ENCODE measurements at regions of chrX and their contacts with region 1.

Region 1: DNA sequence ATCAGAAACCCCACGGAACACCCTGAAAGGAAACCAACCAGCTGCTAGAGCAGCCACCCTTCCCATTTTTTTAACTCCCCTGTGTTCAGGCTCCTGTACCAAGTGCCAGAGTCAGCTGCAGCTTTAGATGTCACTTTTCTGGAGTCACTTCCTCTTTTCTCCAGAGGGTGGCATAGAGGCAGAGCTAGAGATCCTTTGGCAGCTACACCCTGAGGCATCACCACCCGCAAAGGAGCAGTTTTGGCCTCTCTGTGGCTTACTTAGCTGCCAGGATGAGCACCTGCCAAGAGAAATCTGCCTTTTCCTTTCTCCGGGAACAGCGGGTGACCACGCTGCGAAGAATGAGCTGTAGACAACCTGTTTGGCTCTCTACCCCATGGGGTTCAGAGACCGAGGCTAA is 58.0 kb upstream of the CHRDL1 start:
- DNase-seq: no peak
- H3K4me3 Mint-ChIP-seq: no peak overlapping the region
- H3K27ac Mint-ChIP-seq: no peak overlapping the region
- H3K4me1 Mint-ChIP-seq: no peaks in the 10 kb centered on the region
- H3K27me3 Mint-ChIP-seq: peaks cover 1% of the 10 kb centered on the region

Region 2: DNA sequence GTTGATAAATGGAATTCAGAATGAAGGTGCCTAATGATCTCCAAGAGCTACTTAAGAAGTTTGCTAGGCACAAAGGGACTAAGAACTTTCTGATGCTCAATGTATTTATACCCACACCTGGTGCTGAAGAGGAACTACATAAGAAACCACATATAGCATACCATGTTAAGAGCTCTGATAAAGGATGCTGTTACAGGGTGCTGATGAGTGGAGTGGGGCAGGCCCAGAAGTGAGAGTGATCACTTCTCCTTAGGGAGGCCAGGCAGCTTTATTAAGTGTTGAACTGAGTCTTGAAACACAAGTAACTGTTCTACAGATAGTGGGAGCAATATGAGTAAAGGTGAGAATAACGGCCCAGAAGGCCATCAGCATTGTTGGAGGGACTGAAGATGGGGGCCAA is 10.3 kb after region 1 on chrX:
- intact Hi-C with region 1: no loop called
- DNase-seq: no peak
- H3K4me3 Mint-ChIP-seq: no peak overlapping the region
- H3K27ac Mint-ChIP-seq: no peak overlapping the region
- H3K4me1 Mint-ChIP-seq: no peaks in the 10 kb centered on the region
- H3K27me3 Mint-ChIP-seq: peaks cover 4% of the 10 kb centered on the region

Region 3: GRCh38 chrX:111244235-111244750 is 390.7 kb after region 1 on chrX:
- intact Hi-C with region 1: loop called (anchors 5 kb)
- DNase-seq: no peak
- H3K4me3 Mint-ChIP-seq: no peak overlapping the region
- H3K27ac Mint-ChIP-seq: no peak overlapping the region
- H3K4me1 Mint-ChIP-seq: no peaks in the 10 kb centered on the region
- H3K27me3 Mint-ChIP-seq: peaks cover 5% of the 10 kb centered on the region

Measured in activated T-helper 1 cell treated with anti-CD3 and anti-CD28 coated beads, Interleukin-12 subunit alpha, Interleukin-12 subunit beta, Interleukin-2, Interleukin-4 antibody, amounts not matched to agents 30 ng/mL and 10 ng/mL and 1 ng/mL, durations not matched to agents 14 hours and 24 hours and 36 hours (primary cell).